ENCODE measurements at regions of chr10 and their contacts with region 1.

Region 1: GRCh38 chr10:124741281-124741921 is 2.8 kb downstream of the FAM53B start:
- DNase-seq: peak; percentile 84
- H3K4me3 ChIP-seq: no peak overlapping the region
- H3K27ac ChIP-seq: no peak overlapping the region; a peak in 1 of 4 replicates
- H3K4me1 ChIP-seq: peaks cover 12 to 52% of the 10 kb centered on the region in 2 experiments; a peak in 2 of 4 replicates
- H3K27me3 ChIP-seq: no peaks in the 10 kb centered on the region
- CTCF ChIP-seq: peak; percentile 84
- EP300 ChIP-seq: no peak
- RAD21 ChIP-seq: peak; percentile 83

Region 2: DNA sequence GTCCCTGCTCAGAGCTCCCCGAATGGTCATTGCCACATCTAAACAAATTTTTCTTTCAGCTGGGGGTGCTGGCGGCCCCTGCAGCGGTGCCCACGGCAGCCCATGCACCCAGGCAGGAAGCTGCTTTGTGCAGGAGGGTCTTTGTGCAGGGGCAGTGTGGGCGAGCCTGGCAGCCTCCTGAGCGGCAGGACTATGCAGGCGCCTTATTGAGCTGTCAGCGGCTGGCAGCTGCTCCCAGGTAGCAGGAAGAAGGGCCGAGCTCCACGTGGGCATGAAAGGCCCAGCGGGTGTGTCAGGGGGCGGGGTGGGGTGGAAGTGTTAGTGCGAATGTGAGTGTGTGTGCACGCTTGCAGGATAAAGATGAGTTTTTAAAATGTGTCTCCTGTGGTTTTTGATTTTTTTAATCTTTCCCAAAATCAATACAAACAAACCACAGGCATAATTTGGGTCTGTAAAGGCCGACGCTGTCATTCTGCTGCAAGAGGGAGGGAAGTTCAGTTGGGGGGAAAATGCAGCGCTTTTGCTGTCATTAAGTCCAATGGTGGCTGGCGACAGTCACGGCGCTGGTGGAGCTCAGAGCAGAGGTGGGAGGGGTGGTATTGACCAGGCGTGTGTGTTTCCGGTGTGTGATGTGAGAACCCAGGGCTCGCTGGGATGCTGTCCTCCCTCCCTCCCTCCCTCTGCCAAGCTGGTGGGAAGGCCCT is 195.9 kb before region 1 on chr10:
- CTCF ChIA-PET with region 1: interaction called, 192 read pairs
- POLR2A ChIA-PET with region 1: interaction called, 5 read pairs
- DNase-seq: no peak
- H3K4me3 ChIP-seq: no peak overlapping the region
- H3K27ac ChIP-seq: no peak overlapping the region
- H3K4me1 ChIP-seq: peaks cover 0 to 6% of the 10 kb centered on the region in 2 experiments; a peak in 1 of 4 replicates
- H3K27me3 ChIP-seq: no peaks in the 10 kb centered on the region
- CTCF ChIP-seq: no peak
- EP300 ChIP-seq: no peak
- RAD21 ChIP-seq: no peak

Region 3: GRCh38 chr10:124647421-124648130 is 93.8 kb before region 1 on chr10:
- CTCF ChIA-PET with region 1: interaction called, 36 read pairs
- POLR2A ChIA-PET with region 1: no interaction called
- DNase-seq: peak; percentile 64
- H3K4me3 ChIP-seq: no peak overlapping the region
- H3K27ac ChIP-seq: peak overlapping the region in 1 of 2 experiments; percentile 97; a peak in 2 of 4 replicates
- H3K4me1 ChIP-seq: peaks cover 24 to 86% of the 10 kb centered on the region in 2 experiments
- H3K27me3 ChIP-seq: no peaks in the 10 kb centered on the region
- CTCF ChIP-seq: no peak
- EP300 ChIP-seq: no peak
- RAD21 ChIP-seq: no peak; the same call in 1 of the 2 replicates

Region 4: DNA sequence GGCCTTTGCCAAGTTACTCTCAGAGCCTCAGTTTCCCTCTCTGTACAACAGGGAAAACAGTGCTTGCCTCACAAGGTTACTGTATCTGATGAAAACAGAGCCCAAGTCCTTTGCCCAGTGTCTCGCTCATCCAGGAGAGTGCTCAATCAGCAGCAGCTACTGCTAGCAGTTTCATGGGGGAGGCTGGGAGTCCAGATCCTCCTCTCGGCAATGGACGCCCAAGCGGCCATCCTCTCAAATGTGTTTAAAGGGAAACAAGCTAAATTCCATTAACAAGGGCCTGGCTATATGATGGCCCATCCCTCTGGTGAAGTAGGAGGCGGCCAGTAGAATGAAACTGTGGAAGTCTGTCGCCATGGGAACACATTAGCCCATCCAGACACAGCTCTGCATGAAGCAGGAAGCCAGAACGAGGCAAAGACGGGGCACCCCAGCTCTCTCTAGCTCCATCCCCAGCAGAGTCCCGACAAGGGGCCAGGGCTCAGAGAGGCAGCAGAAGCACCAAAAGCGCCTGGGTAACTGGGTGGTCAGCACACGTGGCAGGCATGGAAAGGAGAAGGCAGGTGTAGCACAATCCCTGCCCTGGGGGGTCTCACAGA is 32.4 kb before region 1 on chr10:
- CTCF ChIA-PET with region 1: interaction called, 11 read pairs
- POLR2A ChIA-PET with region 1: interaction called, 3 read pairs
- DNase-seq: peak; percentile 85
- H3K4me3 ChIP-seq: no peak overlapping the region
- H3K27ac ChIP-seq: peak overlapping the region in 1 of 2 experiments; percentile 90; a peak in 2 of 4 replicates
- H3K4me1 ChIP-seq: peaks cover 0 to 61% of the 10 kb centered on the region in 2 experiments; a peak in 3 of 4 replicates
- H3K27me3 ChIP-seq: no peaks in the 10 kb centered on the region
- CTCF ChIP-seq: no peak
- EP300 ChIP-seq: no peak
- RAD21 ChIP-seq: no peak

Region 5: DNA sequence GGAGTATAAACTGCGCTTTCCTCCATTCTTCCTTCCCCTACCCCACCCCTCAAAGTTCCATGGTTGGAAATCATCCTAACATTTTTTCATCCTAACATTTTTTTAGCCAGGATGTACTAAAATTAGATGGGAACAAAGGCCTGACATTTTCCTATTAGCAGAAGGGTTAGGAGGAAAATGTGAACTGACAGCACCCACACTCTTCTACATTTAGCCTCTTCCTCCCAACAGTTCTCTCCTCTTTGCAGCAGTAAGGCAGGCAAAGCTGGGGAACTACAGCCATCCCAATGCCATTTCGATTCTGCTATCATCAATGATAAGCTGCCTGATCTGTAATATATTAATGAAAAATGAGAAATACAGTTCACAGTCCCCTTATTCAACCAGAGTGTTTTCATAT is 14.2 kb after region 1 on chr10:
- CTCF ChIA-PET with region 1: interaction called, 31 read pairs
- POLR2A ChIA-PET with region 1: interaction called, 4 read pairs
- DNase-seq: no peak
- H3K4me3 ChIP-seq: no peak overlapping the region
- H3K27ac ChIP-seq: peak overlapping the region in 1 of 2 experiments; percentile 29; a peak in 1 of 4 replicates
- H3K4me1 ChIP-seq: peaks cover 0 to 7% of the 10 kb centered on the region in 2 experiments; a peak in 1 of 4 replicates
- H3K27me3 ChIP-seq: no peaks in the 10 kb centered on the region
- CTCF ChIP-seq: no peak
- EP300 ChIP-seq: no peak
- RAD21 ChIP-seq: no peak